Activated naive CD4-positive, alpha-beta T cell treated with anti-CD3 and anti-CD28 coated beads for 36 hours (primary cell): ENCODE measurements at regions of chr11 and their contacts with region 1.

Region 1: GRCh38 chr11:102451681-102452460 is 694 bp downstream of the TMEM123 start:
- DNase-seq: peak; percentile 81
- H3K4me3 Mint-ChIP-seq: peak overlapping the region; percentile 89
- H3K27ac Mint-ChIP-seq: peak overlapping the region; percentile 96
- H3K4me1 Mint-ChIP-seq: peaks cover 70% of the 10 kb centered on the region
- H3K27me3 Mint-ChIP-seq: no peaks in the 10 kb centered on the region

Region 2: DNA sequence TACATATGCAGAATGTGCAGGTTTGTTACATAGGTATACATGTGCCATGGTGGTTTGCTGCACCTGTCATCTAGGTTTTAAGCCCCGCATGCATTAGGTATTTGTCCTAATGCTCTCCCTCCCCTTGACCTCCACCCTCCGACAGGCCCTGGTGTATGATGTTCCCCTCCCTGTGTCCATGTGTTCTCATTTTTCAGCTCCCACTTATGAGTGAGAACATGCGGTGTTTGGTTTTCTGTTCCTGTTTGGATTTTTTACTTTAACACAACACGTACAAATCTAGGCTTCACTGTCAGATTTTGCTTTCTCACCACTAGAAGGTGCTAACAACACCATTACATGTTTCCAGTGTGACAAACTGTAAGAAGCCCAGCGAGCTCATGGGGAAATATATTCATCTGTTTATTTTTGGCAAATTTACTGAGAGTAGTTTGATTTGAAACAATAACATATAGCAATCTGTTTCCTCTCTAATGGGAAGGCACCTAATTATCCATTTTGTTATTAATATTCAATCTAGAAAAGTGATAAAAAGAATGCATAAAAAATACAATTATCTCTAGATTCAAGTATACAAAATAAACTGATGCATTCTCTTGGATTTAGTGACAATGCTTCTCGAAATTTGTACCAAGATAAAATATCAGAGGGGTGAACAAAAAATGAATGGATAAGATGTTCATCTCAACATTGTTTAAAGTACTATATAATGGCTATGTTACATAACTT is 157.8 kb before region 1 on chr11:
- CTCF ChIA-PET with region 1: interaction called, 6 read pairs
- intact Hi-C with region 1: loop called (anchors 1 kb)
- DNase-seq: peak; percentile 35
- H3K4me3 Mint-ChIP-seq: peak overlapping the region; percentile 74
- H3K27ac Mint-ChIP-seq: peak overlapping the region; percentile 85
- H3K4me1 Mint-ChIP-seq: peaks cover 21% of the 10 kb centered on the region
- H3K27me3 Mint-ChIP-seq: no peaks in the 10 kb centered on the region

Region 3: DNA sequence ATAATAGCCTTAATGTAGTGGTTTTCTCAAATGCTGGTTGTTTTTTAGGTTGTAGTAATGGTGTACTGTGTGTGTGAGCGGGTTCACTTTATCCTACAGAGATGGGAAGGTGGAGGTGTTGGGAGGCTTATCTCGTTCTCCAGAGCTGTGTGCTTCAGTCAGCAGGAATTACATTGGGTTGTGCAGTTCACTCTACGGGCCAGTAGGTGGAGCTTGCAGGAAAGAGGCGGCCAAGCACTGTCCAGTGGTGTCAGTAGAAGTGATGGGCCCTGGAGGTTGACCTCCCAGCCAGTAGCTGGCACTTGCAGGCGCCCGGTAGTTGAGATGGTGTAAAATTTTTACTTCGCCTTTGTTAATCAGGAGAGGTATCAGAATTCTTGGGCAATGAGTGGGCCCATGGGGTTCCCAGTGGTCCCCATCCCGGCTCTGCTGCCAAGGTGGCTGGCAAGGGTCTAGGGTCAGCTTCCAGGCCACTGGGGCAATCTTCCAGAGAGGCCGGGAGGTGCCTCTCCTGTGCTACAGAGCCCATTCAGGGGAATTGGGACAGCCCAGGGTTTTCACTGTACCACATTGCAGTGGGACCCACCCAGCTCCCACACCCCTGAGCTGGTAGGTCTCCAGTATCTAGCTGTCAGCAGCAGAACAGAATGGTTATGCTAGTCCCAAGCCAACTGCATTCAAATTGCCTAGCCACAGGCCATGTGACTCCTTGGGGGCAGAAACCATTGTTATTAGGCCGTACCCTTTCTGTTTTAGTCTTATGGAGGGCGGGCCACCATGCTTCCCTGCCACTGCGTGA is 61.0 kb before region 1 on chr11:
- CTCF ChIA-PET with region 1: interaction called, 58 read pairs
- intact Hi-C with region 1: loop called (anchors 1 kb)
- DNase-seq: peak; percentile 72
- H3K4me3 Mint-ChIP-seq: no peak overlapping the region
- H3K27ac Mint-ChIP-seq: peak overlapping the region; percentile 29
- H3K4me1 Mint-ChIP-seq: peaks cover 40% of the 10 kb centered on the region
- H3K27me3 Mint-ChIP-seq: no peaks in the 10 kb centered on the region

Region 4: DNA sequence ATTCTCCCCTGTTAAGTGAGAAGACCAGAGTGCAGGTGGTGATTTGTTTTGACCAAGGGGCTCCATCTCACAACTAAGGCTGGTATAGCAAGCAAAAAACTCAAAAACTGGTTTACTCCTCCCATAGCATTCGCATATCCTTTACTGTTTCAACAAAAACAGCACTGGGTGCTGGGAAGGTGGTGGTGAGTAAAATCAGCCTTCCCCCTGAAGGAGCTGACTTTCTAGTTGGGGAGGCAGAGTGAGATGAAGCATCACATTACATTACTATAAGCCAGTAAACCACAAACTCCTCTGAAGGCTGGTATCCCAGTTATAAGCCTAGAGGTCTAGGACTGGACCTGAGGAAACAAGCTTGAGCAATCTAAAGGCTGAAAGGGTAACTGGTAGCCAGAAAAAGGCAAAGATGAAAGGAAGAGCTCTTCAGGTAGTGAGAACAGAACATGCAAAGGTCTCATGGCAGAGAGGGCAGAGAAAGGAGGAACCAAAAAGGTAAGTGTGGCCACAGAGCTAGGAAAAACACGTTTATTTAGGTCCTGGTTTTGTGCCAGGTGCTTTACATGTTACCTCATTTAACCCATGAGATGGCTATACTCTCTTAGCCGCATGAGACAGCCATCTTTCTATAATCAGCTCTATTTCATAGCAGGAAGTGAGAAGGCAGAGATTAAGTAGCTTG is 21.6 kb before region 1 on chr11:
- CTCF ChIA-PET with region 1: interaction called, 3 read pairs
- intact Hi-C with region 1: loop called (anchors 1 kb)
- DNase-seq: peak; percentile 86
- H3K4me3 Mint-ChIP-seq: peak overlapping the region; percentile 44
- H3K27ac Mint-ChIP-seq: peak overlapping the region; percentile 95
- H3K4me1 Mint-ChIP-seq: peaks cover 75% of the 10 kb centered on the region
- H3K27me3 Mint-ChIP-seq: no peaks in the 10 kb centered on the region

Region 5: DNA sequence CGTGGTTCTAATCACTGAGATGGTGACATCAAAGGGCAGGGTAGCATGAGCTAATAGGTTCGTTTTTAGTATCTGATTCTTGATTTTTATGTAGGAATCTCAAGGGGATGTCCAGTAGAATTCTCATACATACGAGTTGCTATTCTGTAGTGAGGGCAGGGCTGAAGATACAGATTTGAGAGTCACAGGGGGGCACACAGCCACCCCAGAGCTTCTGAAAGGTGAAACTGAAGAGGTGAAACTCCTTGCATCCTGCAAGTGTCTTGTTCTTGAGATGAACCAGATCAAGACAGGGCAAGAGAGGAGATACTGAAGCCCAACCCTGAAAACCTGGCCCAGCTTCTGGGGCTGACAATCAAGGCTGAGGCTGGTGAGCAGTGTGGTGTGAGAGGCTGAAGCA is 36.3 kb after region 1 on chr11:
- CTCF ChIA-PET with region 1: interaction called, 4 read pairs
- intact Hi-C with region 1: loop called (anchors 1 kb)
- DNase-seq: no peak
- H3K4me3 Mint-ChIP-seq: peak overlapping the region; percentile 13
- H3K27ac Mint-ChIP-seq: peak overlapping the region; percentile 42
- H3K4me1 Mint-ChIP-seq: peaks cover 63% of the 10 kb centered on the region
- H3K27me3 Mint-ChIP-seq: no peaks in the 10 kb centered on the region

Region 6: GRCh38 chr11:102614485-102614884 is 162.6 kb after region 1 on chr11:
- CTCF ChIA-PET with region 1: no interaction called
- intact Hi-C with region 1: loop called (anchors 5 kb)
- DNase-seq: no peak
- H3K4me3 Mint-ChIP-seq: no peak overlapping the region
- H3K27ac Mint-ChIP-seq: no peak overlapping the region
- H3K4me1 Mint-ChIP-seq: peaks cover 13% of the 10 kb centered on the region
- H3K27me3 Mint-ChIP-seq: no peaks in the 10 kb centered on the region